ENCODE measurements at regions of chr1 and their contacts with region 1.

Region 1: DNA sequence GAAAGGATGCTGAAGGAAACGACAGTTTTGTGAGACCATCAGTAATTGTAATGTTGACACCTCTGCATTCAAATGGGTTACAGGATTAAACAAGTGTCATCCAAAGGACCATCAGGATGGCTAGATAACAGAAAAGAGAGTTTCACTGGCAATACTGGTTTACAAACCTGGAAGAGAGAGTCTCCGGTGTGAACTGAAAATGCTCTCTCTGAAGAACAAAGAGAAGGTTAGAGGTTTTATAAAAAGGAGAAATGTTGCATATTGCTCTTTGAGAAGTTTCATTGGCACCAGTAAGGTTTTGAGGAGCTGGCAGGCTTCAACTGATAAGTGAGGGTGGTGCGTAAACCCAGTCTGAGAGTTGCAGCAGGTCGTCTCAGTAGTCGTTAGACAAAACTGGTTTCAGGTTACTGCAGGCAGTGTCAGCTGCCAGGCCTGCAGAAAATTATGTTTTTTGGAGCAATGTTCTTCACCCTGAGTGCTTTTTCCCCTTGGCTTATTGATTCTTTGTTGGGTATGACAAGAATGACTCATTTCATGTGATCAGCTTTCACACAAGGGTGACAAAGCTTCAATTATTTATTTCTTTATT is 42.2 kb downstream of the KCNK1 start:
- DNase-seq: no peak

Region 2: GRCh38 chr1:233689748-233690254 is 33.7 kb after region 1 on chr1:
- intact Hi-C with region 1: loop called in 1 of 2 experiments (anchors 1 kb)
- DNase-seq: no peak

Measured in posterior vena cava (tissue), 2 donors.